Panc1 (cell line): ENCODE measurements at regions of chr10 and their contacts with region 1.

Region 1: DNA sequence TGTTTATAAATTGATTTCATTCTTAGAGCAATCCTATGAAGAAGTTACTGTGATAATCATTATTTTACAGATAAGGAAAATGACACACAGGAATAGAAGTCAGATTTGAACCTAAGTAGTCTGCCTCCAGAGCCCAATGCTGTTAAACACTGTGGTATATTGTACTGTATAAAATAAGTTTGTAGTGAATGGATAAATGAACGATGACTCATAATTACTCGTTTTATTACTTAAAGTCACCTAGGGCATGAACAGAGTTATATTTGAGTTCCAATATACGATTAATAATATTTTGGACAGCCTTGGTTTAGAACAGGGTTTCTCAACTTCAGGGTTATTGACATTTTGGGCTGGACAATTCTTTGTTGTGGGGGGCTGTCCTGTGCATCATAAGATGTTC is 7.8 kb upstream of the BTRC start:
- DNase-seq: no peak
- ATAC-seq: no peak
- H3K4me3 ChIP-seq: no peak overlapping the region
- H3K27ac ChIP-seq: no peak overlapping the region
- H3K4me1 ChIP-seq: no peaks in the 10 kb centered on the region
- H3K27me3 ChIP-seq: no peaks in the 10 kb centered on the region; the same call in 1 of the 2 replicates
- CTCF ChIP-seq: no peak

Region 2: DNA sequence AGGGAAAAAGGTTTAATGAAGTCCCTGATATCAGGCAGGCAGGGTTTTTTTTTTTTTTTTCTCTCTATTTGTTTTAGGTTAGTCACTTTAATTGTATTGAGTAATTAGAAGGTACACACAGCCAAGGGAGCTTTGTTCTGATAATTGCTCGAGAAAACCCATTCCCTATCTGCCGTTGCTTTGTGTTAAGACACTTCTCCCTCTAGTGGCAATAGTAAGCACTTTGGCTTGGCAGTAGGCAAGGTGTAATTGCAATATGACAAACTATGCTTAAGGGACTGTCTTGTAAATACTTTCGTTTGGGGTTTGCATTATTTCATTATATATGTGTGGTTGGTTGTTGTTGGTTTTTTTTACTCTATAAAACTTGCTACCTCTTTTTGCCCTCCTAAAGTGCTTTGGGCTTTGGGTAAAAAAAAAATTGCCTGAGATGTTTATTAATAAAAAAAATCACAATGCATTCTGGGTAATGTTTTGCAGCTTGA is 121.2 kb after region 1 on chr10:
- CTCF ChIA-PET with region 1: interaction called, 13 read pairs
- POLR2A ChIA-PET with region 1: no interaction called
- in situ Hi-C with region 1: no loop called
- intact Hi-C with region 1: no loop called
- DNase-seq: peak; percentile 76
- ATAC-seq: peak; percentile 94
- H3K4me3 ChIP-seq: no peak overlapping the region
- H3K27ac ChIP-seq: no peak overlapping the region
- H3K4me1 ChIP-seq: peaks cover 5% of the 10 kb centered on the region; the same call in 1 of the 2 replicates
- H3K27me3 ChIP-seq: no peaks in the 10 kb centered on the region
- CTCF ChIP-seq: peak; percentile 87; the same call in 1 of the 2 replicates